CD8-positive, alpha-beta memory T cell (primary cell): ENCODE measurements at regions of chr12 and their contacts with region 1.

Region 1: GRCh38 chr12:69254046-69254445 is 14.7 kb downstream of the CPSF6 start:
- DNase-seq: peak in 2 of 5 donors; percentile 61 to 66
- H3K4me3 ChIP-seq: no peak overlapping the region
- H3K4me3 Mint-ChIP-seq: no peak overlapping the region
- H3K27ac ChIP-seq: no peak overlapping the region
- H3K27ac Mint-ChIP-seq: peak overlapping the region; percentile 35 to 94 (median 76)
- H3K4me1 ChIP-seq: peaks cover 14% of the 10 kb centered on the region
- H3K4me1 Mint-ChIP-seq: peaks cover 39 to 53% (median 52%) of the 10 kb centered on the region in 3 donors
- H3K27me3 ChIP-seq: no peaks in the 10 kb centered on the region
- H3K27me3 Mint-ChIP-seq: no peaks in the 10 kb centered on the region

Region 2: GRCh38 chr12:69157023-69157655 is 96.9 kb before region 1 on chr12:
- CTCF ChIA-PET with region 1: interaction called, 46 read pairs
- POLR2A ChIA-PET with region 1: no interaction called
- DNase-seq: peak; percentile 76 to 90 (median 82)
- H3K4me3 ChIP-seq: no peak overlapping the region
- H3K4me3 Mint-ChIP-seq: peak overlapping the region; percentile 46 to 84 (median 67)
- H3K27ac ChIP-seq: no peak overlapping the region
- H3K27ac Mint-ChIP-seq: peak overlapping the region in 5 of 8 donors; percentile 19 to 91 (median 33)
- H3K4me1 ChIP-seq: peaks cover 6% of the 10 kb centered on the region
- H3K4me1 Mint-ChIP-seq: peaks cover 12 to 29% (median 21%) of the 10 kb centered on the region in 3 donors
- H3K27me3 ChIP-seq: no peaks in the 10 kb centered on the region
- H3K27me3 Mint-ChIP-seq: peaks cover 0 to 3% of the 10 kb centered on the region in 2 donors

Region 3: DNA sequence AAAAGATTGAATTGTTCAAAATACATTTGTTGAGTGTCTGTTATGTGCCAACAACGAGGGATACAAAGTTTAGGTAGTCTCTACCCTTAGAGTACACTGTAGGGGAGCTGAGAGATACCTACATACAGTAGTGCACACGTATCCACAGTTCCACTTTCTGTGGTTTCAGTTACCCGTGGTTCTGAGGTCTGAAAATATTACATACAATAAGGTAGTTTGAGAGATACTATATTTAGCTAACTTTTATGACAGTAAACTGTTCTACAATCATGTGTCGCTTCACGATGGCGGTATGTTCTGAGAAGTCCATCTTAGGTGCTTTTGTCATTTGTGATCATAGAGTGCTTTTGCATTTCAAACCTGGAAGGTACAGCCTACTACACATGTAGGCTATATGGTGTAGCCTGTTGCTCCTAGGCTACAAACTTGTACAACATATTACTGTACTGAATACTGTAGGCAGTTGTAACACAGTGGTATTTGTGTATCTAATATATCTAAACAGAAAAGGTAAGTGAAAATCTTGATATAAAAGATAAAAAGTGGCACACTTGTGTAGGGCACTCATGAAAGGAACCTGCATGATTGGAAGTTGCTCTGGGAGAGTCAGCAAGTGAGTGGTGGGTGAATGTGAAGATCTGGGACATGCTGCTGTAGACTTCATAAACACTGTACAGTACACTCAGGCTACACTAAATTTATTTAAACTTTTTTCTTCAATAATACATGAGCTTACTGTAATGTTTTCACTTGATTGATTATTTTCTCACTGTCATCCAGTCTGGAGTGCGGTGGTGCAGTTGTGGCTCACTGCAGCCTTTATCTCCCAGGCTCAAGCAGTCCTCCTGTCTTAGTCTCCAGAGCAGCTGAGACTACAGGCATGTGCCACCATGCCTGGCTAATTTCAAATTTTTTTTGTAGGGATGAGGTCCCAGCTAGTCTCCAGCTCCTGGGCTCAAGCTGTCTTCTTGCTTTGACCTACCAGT is 10.7 kb before region 1 on chr12:
- CTCF ChIA-PET with region 1: interaction called, 17 read pairs
- POLR2A ChIA-PET with region 1: interaction called, 3 read pairs
- DNase-seq: no peak
- H3K4me3 ChIP-seq: peak overlapping the region; percentile 9
- H3K4me3 Mint-ChIP-seq: peak overlapping the region; percentile 2 to 75 (median 37)
- H3K27ac ChIP-seq: no peak overlapping the region
- H3K27ac Mint-ChIP-seq: peak overlapping the region in 7 of 8 donors; percentile 8 to 92 (median 35)
- H3K4me1 ChIP-seq: peaks cover 70% of the 10 kb centered on the region
- H3K4me1 Mint-ChIP-seq: peaks cover 72 to 88% (median 84%) of the 10 kb centered on the region in 3 donors
- H3K27me3 ChIP-seq: no peaks in the 10 kb centered on the region
- H3K27me3 Mint-ChIP-seq: no peaks in the 10 kb centered on the region